Ascending aorta (tissue), 2 donors: ENCODE measurements at regions of chr2 and their contacts with region 1.

Region 1: DNA sequence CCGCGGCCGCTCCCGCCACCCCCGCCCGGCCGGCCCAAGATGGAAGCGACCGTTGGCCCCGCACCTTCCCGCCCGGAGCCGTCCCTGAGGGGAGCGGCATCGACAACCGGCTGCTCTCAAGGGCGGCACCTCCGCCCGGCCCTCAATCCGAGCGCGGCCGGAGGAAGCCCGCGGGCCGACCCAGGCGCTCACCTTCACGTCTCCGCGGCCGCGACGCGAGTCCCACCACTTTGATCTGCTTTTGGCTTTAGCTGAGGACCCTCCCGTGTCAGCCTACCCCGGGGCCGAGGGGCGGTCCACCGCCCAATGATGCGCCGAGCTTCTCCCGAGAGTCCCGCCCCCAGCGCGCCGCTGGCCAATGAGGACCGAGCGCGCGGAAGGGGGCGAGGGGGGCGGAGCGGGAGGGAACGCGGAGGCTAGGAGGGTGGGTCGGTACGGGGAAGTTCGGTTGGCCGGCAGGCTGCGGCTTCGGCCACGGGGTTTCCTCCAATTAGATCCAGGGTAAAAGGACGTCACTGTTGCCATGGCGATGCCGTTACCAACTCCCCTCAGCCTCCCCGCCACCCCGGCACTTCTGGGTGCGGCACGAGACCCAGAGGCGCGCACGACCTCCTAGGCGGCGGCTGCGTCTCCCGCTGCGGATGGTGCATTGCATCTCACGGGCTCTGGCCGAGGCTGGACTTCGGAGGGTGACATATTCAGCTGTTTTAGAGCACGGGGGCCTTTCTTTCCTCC is at the start of gene YWHAQ:
- DNase-seq: peak; percentile 97 to 100
- H3K4me3 ChIP-seq: peak within 1 kb of the TSS; percentile 79 to 95
- H3K27ac ChIP-seq: peak within 1 kb of the TSS; percentile 96 to 97
- H3K4me1 ChIP-seq: peaks cover 5 to 33% of the 10 kb centered on the region in 2 donors
- H3K27me3 ChIP-seq: no peaks in the 10 kb centered on the region
- CTCF ChIP-seq: no peak
- total RNA-seq, gene YWHAQ: 172 TPM

Region 2: DNA sequence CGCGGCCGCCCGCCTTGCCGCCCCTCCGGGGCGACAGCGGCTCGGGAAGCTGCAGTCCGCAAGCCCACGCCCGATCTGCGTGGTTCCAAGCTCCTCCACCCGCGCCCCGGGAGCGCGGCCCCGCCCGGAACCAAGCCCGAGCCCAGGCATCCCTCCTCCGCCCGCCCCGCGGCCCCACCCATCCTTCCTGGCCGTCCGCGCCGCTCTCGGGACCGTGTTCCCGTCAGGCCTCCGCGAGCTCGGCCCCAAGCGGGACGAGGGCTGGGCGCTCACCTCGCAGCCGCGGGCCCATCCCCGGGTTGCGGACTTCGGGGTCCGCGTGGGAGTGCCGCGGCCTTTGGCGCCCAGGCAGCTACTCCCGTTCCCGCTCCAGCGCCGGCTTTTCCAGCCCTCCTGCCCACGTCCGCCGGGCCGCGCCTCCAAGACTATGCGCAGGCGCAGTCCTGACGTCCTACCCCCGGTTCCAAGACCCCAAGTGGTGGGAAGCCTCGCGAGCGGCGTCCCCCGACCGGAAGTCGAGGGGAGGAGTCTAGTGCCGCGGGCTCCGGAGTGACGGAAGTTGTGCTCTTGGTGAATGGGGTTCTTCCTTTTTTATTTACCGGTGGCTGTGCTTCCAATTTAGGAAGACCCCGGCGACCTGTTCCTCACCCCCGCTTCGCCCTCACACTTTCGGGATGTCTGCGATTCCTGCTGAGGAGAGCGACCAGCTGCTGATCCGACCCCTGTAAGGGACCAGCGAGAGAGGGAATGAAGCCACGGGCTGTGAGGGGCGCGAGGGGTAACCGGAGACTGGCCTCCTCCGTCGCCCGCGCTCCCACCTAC is 207.6 kb before region 1 on chr2 and contains the starts of genes CPSF3 and ITGB1BP1:
- intact Hi-C with region 1: loop called (anchors 2 kb)
- DNase-seq: peak; percentile 85 to 98
- H3K4me3 ChIP-seq: peak within 1 kb of the TSS; percentile 83 to 93
- H3K27ac ChIP-seq: peak within 1 kb of the TSS; percentile 91 to 94
- H3K4me1 ChIP-seq: peaks cover 7 to 33% of the 10 kb centered on the region in 2 donors
- H3K27me3 ChIP-seq: no peaks in the 10 kb centered on the region
- CTCF ChIP-seq: no peak
- total RNA-seq, gene CPSF3: 5.3 TPM
- total RNA-seq, gene ITGB1BP1: 25.4 TPM

Region 3: GRCh38 chr2:9538000-9538507 is 92.9 kb before region 1 on chr2:
- intact Hi-C with region 1: loop called (anchors 5 kb)
- DNase-seq: no peak
- H3K4me3 ChIP-seq: no peak overlapping the region
- H3K27ac ChIP-seq: peak overlapping the region; percentile 46 to 61
- H3K4me1 ChIP-seq: peaks cover 0 to 9% of the 10 kb centered on the region in 2 donors
- H3K27me3 ChIP-seq: no peaks in the 10 kb centered on the region
- CTCF ChIP-seq: no peak

Region 4: GRCh38 chr2:9693211-9693520 is 62.2 kb after region 1 on chr2:
- intact Hi-C with region 1: loop called (anchors 1 kb)
- DNase-seq: peak; percentile 75 to 93
- H3K4me3 ChIP-seq: peak overlapping the region; percentile 9 to 34
- H3K27ac ChIP-seq: peak overlapping the region; percentile 70 to 85
- H3K4me1 ChIP-seq: peaks cover 4 to 14% of the 10 kb centered on the region in 2 donors
- H3K27me3 ChIP-seq: no peaks in the 10 kb centered on the region
- CTCF ChIP-seq: no peak

Region 5: GRCh38 chr2:10448208-10448645 is 817.3 kb after region 1 on chr2 and contains the start of gene ODC1:
- intact Hi-C with region 1: loop called (anchors 2 kb)
- DNase-seq: peak; percentile 88 to 98
- H3K4me3 ChIP-seq: peak within 1 kb of the TSS; percentile 70 to 83
- H3K27ac ChIP-seq: peak within 1 kb of the TSS; percentile 92 to 96
- H3K4me1 ChIP-seq: peaks cover 7 to 33% of the 10 kb centered on the region in 2 donors
- H3K27me3 ChIP-seq: no peaks in the 10 kb centered on the region
- CTCF ChIP-seq: no peak
- total RNA-seq, gene ODC1: 82.8 TPM